Tibial artery (tissue), 4 donors: ENCODE measurements at regions of chr17 and their contacts with region 1.

Region 1: GRCh38 chr17:10646392-10646990 is 10.6 kb downstream of the MYH3 start:
- DNase-seq: peak; percentile 69 to 79
- H3K4me3 ChIP-seq: no peak overlapping the region
- H3K27ac ChIP-seq: no peak overlapping the region
- H3K4me1 ChIP-seq: peaks cover 0 to 14% (median 1%) of the 10 kb centered on the region in 4 donors
- H3K27me3 ChIP-seq: no peaks in the 10 kb centered on the region
- CTCF ChIP-seq: peak; percentile 76 to 88

Region 2: DNA sequence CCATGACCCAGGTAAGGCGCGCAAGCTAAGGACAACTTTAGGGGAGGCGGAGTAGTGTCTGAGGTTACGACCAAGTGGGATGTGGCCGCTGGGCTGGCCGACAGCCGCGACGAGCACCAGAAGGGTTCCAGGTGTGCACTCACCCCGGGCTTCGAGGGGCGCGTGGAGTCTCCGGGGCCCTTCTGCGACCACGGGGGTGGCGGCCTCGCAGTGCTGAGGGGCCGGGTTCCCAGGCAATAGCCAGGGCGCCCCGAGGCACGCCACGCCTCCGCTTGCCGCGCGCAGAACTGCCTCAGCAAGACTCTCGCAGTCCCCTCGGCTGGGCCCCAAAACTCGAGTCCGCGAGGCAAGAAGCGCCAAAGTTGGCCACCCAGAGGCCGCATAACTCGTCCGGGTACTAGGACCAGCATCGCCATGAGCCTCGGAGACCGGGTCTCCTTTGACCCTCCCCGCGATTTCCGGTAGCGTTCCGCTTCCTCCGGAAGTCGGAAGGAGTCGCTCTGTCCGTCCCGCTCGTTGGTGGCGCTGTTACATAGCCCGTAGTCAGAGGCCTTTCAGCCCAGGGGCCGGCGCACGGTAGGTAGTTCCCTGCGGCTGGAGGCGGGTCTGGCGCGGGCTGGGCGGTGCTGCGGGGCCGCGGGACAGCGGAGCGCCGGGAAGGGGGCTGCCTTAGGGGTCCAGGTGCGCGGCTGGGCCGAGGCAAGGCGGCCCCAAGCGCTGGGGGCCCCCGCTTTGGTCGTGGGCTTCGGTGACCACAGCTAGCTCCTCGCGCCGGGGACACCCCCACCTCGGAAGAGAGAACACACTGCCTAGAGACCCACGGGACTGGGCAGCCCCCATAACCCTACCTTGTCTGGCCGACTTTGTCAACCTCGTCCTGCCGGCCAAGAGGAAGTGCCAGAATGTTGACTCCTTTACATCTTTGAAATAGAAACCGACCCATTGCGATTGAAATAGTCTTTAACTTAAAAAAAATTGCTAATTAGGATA is 50.9 kb after region 1 on chr17 and contains the starts of genes ADPRM and SCO1:
- intact Hi-C with region 1: loop called (anchors 5 kb)
- DNase-seq: peak; percentile 95 to 96
- H3K4me3 ChIP-seq: peak within 1 kb of the TSS; percentile 94 to 95
- H3K27ac ChIP-seq: peak within 1 kb of the TSS; percentile 96 to 98
- H3K4me1 ChIP-seq: peaks cover 0 to 45% (median 22%) of the 10 kb centered on the region in 4 donors
- H3K27me3 ChIP-seq: no peaks in the 10 kb centered on the region
- CTCF ChIP-seq: peak in 1 of 2 experiments; percentile 33